ENCODE measurements at regions of chr1 and their contacts with region 1.

Region 1: DNA sequence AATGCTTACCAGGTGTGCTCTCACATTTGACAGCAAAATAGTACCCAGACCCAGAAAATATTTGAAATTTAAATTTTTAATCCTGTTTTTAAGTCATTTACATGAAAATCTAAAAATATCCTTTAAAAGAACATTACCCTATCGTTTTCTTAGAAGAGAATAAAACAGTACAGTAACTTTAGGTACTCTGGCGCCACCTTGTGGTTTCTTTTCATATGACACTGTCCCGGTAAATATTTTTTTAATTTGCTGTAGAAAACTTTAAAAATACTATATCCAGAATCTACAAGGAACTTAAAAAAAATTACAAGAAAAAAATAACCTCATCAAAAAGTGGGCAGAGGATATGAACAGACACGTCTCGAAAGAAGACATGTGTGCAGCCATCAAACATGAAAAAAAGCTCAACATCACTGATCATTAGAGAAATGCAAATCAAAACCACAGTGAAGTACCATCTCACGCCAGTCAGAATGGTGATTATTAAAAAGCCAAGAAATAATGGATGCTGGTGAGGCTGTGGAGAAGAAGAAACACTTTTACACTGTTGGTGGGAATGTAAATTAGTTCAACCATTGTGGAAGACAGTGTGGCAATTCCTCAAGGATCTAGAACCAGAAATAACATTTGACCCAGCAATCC is 129.2 kb downstream of the RGS21 start:
- DNase-seq: peak; percentile 74
- ATAC-seq: no peak
- H3K4me3 Mint-ChIP-seq: no peak overlapping the region
- H3K27ac Mint-ChIP-seq: no peak overlapping the region
- H3K4me1 Mint-ChIP-seq: no peaks in the 10 kb centered on the region
- H3K27me3 Mint-ChIP-seq: peaks cover 9% of the 10 kb centered on the region

Region 2: DNA sequence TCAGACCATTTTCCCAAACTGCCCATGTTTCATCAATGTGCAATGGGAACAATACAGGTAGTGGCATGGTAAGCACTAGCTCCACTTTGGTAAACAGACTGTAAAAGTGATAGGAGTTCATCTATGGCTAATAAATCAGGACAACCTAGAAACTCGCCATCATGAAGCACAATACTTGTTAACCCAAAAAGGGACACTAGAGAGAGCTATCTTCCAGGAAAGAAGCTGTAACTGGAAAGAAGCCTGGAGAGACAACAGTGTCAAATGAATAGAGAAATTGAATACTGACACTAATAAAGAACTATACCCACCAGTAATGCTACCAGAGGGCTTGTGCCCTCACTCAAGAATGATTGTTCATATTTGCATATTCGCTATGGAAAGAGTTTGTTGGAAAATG is 452.4 kb before region 1 on chr1:
- CTCF ChIA-PET with region 1: no interaction called
- POLR2A ChIA-PET with region 1: no interaction called
- intact Hi-C with region 1: loop called in 1 of 2 experiments (anchors 10 kb)
- DNase-seq: no peak
- ATAC-seq: no peak
- H3K4me3 Mint-ChIP-seq: no peak overlapping the region
- H3K27ac Mint-ChIP-seq: no peak overlapping the region
- H3K4me1 Mint-ChIP-seq: no peaks in the 10 kb centered on the region
- H3K27me3 Mint-ChIP-seq: no peaks in the 10 kb centered on the region

Measured in activated CD4-positive, alpha-beta T cell treated with anti-CD3 and anti-CD28 coated beads for 36 hours (primary cell).